ENCODE measurements at regions of chr18 and their contacts with region 1.

Region 1: GRCh38 chr18:23433360-23433759 is 19.7 kb upstream of the RIOK3 start:
- DNase-seq: no peak
- ATAC-seq: no peak
- H3K4me3 ChIP-seq: no peak overlapping the region
- H3K4me3 Mint-ChIP-seq: no peak overlapping the region
- H3K27ac ChIP-seq: no peak overlapping the region
- H3K27ac Mint-ChIP-seq: no peak overlapping the region
- H3K4me1 ChIP-seq: peaks cover 2 to 8% of the 10 kb centered on the region in 2 experiments
- H3K4me1 Mint-ChIP-seq: peaks cover 10 to 18% (median 14%) of the 10 kb centered on the region in 3 donors
- H3K27me3 ChIP-seq: no peaks in the 10 kb centered on the region
- H3K27me3 Mint-ChIP-seq: no peaks in the 10 kb centered on the region

Region 2: DNA sequence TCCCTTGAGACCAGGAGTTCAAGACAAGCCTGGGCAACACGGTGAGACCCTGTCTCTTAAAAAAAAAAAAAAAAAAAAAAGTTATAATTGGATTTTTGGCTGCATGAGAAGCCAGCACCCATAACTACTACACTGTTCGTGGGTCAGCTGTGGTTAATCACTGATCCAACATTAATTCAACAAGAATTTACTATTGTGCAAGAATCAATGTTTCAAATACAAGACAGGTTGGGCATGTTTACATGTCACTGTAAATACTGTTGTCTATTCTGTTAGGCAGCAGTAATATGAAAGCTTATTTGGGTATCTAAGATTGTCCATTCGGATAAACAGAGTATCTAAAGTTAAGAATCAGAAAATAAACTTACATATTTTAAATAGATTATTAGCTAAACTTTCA is 1895.1 kb before region 1 on chr18:
- CTCF ChIA-PET with region 1: no interaction called
- POLR2A ChIA-PET with region 1: interaction called in 1 of 2 experiments, 12 read pairs
- DNase-seq: no peak
- ATAC-seq: no peak
- H3K4me3 ChIP-seq: no peak overlapping the region
- H3K4me3 Mint-ChIP-seq: no peak overlapping the region
- H3K27ac ChIP-seq: no peak overlapping the region
- H3K27ac Mint-ChIP-seq: no peak overlapping the region
- H3K4me1 ChIP-seq: no peaks in the 10 kb centered on the region
- H3K4me1 Mint-ChIP-seq: peaks cover 2 to 6% (median 4%) of the 10 kb centered on the region in 3 donors
- H3K27me3 ChIP-seq: no peaks in the 10 kb centered on the region
- H3K27me3 Mint-ChIP-seq: no peaks in the 10 kb centered on the region

Region 3: GRCh38 chr18:24103320-24104021 is 670.1 kb after region 1 on chr18:
- CTCF ChIA-PET with region 1: no interaction called
- POLR2A ChIA-PET with region 1: interaction called in 1 of 2 experiments, 10 read pairs
- DNase-seq: no peak
- ATAC-seq: no peak
- H3K4me3 ChIP-seq: no peak overlapping the region
- H3K4me3 Mint-ChIP-seq: no peak overlapping the region
- H3K27ac ChIP-seq: no peak overlapping the region
- H3K27ac Mint-ChIP-seq: no peak overlapping the region
- H3K4me1 ChIP-seq: peaks cover 0 to 5% of the 10 kb centered on the region in 2 experiments
- H3K4me1 Mint-ChIP-seq: peaks cover 30 to 49% (median 34%) of the 10 kb centered on the region in 3 donors
- H3K27me3 ChIP-seq: no peaks in the 10 kb centered on the region
- H3K27me3 Mint-ChIP-seq: no peaks in the 10 kb centered on the region